Esophagus squamous epithelium (tissue), 5 donors: ENCODE measurements at regions of chr11 and their contacts with region 1.

Region 1: GRCh38 chr11:44538375-44539054 is 26.9 kb upstream of the CD82 start:
- DNase-seq: no peak
- H3K4me3 ChIP-seq: no peak overlapping the region
- H3K27ac ChIP-seq: no peak overlapping the region
- H3K4me1 ChIP-seq: peaks cover 0 to 4% (median 0%) of the 10 kb centered on the region in 3 donors
- H3K27me3 ChIP-seq: peaks cover 0 to 9% (median 0%) of the 10 kb centered on the region in 4 donors
- CTCF ChIP-seq: peak; percentile 91 to 94 (median 92)
- POLR2A ChIP-seq: no peak

Region 2: DNA sequence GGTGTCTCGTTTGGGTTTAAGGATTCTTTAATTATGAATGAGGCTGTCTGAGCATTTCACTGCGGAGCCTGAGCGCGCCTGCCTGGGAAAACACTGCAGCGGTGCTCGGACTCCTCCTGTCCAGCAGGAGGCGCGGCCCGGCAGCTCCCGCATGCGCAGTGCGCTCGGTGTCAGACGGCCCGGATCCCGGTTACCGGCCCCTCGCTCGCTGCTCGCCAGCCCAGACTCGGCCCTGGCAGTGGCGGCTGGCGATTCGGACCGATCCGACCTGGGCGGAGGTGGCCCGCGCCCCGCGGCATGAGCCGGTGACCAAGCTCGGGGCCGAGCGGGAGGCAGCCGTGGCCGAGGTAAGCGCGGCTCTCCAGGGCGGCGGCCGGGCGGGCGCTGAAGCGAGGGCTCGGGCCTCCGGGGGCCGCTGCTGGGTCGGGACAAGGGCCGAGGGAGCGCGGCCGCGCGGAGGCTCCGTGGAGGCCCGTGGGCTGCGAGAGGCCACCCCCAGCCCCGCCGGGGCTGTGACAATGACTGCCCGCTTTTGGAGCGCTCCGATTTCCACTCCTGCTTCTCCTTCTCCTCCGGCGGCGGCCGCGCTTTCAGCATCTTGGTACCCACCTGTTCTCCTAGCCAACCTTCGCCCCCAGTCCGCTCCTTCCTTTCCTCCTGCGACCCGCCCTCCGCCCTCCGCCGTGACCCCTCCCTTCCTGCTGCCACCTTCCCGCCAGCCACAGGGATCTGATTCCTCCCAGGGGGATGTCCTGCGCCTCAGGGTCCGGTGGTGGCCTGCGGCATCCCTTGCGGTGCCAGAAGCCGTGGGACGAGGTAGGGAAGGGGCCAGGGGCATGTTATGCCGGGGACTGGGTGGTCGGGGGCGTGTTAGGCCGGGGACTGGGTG is 442.8 kb before region 1 on chr11 and contains the start of gene EXT2:
- intact Hi-C with region 1: loop called (anchors 10 kb)
- DNase-seq: peak; percentile 41
- H3K4me3 ChIP-seq: peak within 1 kb of the TSS; percentile 70 to 99 (median 86)
- H3K27ac ChIP-seq: peak within 1 kb of the TSS; percentile 55 to 82 (median 79)
- H3K4me1 ChIP-seq: peaks cover 10 to 39% (median 19%) of the 10 kb centered on the region in 3 donors
- H3K27me3 ChIP-seq: no peaks in the 10 kb centered on the region
- CTCF ChIP-seq: peak; percentile 83 to 97 (median 88)
- POLR2A ChIP-seq: peak in 1 of 4 donors; percentile 65
- total RNA-seq, gene EXT2: 19.0 to 53.2 (median 44.5) TPM

Region 3: DNA sequence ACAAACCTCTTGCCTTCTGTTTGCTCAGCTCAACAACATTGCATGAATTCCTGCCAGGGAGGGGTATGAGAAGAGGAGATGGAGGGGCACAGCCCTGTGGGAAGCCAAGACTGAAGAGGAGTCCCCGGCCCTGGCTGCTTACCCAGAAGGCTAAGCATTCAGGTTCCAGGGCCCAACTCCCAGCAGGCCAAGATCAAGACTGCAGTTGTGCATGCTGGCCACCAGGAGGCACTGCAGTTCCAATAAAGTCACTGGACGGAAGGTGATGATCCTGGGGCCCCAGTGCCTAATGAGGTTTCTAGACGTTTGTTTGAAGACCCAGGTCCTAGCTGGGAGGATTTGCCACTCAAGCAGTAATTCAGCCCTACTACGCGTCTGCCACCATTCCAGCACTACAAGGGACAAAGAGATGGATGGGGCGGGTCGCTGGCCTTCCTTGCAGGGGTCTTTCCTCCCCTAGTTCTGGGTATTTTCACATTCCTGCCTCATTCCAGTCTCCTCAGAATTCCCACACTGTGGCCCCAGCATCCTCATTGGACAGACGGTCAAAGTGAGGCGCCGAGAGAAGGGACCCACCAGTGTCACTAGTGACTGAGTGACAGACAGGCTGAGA is 252.1 kb before region 1 on chr11:
- intact Hi-C with region 1: loop called (anchors 2 kb)
- DNase-seq: no peak
- H3K4me3 ChIP-seq: no peak overlapping the region
- H3K27ac ChIP-seq: no peak overlapping the region
- H3K4me1 ChIP-seq: peaks cover 0 to 9% (median 0%) of the 10 kb centered on the region in 3 donors
- H3K27me3 ChIP-seq: no peaks in the 10 kb centered on the region
- CTCF ChIP-seq: peak; percentile 75 to 93 (median 85)
- POLR2A ChIP-seq: no peak